CD4-positive, alpha-beta memory T cell (primary cell): ENCODE measurements at regions of chr2 and their contacts with region 1.

Region 1: GRCh38 chr2:37083873-37084794 is at the starts of genes GPATCH11 and HEATR5B:
- DNase-seq: peak; percentile 93 to 95 (median 94)
- H3K4me3 ChIP-seq: peak within 1 kb of the TSS; percentile 85 to 94
- H3K4me3 Mint-ChIP-seq: no peak within 1 kb of the TSS
- H3K27ac ChIP-seq: peak within 1 kb of the TSS; percentile 81
- H3K27ac Mint-ChIP-seq: no peak within 1 kb of the TSS
- H3K4me1 ChIP-seq: peaks cover 53% of the 10 kb centered on the region
- H3K4me1 Mint-ChIP-seq: peaks cover 13 to 39% (median 28%) of the 10 kb centered on the region in 4 donors
- H3K27me3 ChIP-seq: no peaks in the 10 kb centered on the region
- H3K27me3 Mint-ChIP-seq: no peaks in the 10 kb centered on the region
- total RNA-seq, gene GPATCH11: 17.3 to 18.9 TPM
- total RNA-seq, gene HEATR5B: 52.6 to 55.2 TPM

Region 2: GRCh38 chr2:37125416-37125815 is 41.3 kb after region 1 on chr2:
- CTCF ChIA-PET with region 1: no interaction called
- POLR2A ChIA-PET with region 1: no interaction called
- intact Hi-C with region 1: no loop called
- DNase-seq: no peak
- H3K4me3 ChIP-seq: no peak overlapping the region
- H3K4me3 Mint-ChIP-seq: no peak overlapping the region
- H3K27ac ChIP-seq: no peak overlapping the region
- H3K27ac Mint-ChIP-seq: no peak overlapping the region
- H3K4me1 ChIP-seq: no peaks in the 10 kb centered on the region
- H3K4me1 Mint-ChIP-seq: peaks cover 0 to 4% (median 3%) of the 10 kb centered on the region in 4 donors
- H3K27me3 ChIP-seq: no peaks in the 10 kb centered on the region
- H3K27me3 Mint-ChIP-seq: no peaks in the 10 kb centered on the region

Region 3: DNA sequence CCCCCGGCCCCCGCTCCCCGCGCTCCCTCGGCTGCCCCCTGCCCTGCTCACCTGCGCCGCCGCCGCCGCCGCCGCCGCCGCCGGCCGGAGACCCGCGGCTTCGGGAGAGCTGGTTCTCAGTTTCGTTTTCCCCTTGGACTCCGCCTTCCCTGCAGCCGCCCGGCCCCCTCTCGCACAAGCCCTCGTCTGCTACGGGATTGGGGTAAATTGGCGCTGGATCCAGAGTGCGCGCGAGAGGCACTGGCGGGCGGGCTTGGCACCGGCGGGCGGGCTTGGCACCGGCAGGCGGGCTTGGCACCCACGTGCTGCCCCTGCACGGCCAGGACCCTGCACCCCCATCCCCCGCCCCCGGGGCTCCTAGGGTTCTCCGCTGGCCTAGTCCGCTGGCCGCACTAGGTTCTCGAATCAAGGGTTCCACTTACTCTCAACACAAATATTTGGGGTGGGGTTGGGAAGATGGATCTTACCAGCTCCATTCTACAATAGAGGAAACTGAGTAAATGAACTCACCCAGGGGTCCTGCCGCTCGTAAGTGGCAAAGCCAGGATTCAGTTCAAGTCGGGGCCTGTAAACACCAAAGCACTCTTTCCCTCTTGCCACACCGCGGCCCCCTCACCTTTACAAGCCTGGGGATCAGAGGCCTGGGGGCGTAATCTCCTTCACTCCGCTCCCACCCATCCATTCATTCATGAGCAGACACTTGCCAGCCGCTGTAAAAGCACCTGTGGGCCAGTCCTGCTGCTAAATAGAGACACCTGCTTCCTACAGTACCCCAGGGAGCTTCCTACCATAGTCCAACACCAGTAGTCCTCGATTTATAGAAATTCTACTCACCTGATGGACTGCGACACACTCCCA is 73.0 kb after region 1 on chr2 and contains the start of gene EIF2AK2:
- CTCF ChIA-PET with region 1: no interaction called
- POLR2A ChIA-PET with region 1: interaction called, 3 read pairs
- intact Hi-C with region 1: loop called (anchors 2 kb)
- DNase-seq: peak; percentile 84 to 90 (median 87)
- H3K4me3 ChIP-seq: peak within 1 kb of the TSS; percentile 62 to 63
- H3K4me3 Mint-ChIP-seq: peak within 1 kb of the TSS; percentile 88 to 96 (median 94)
- H3K27ac ChIP-seq: peak within 1 kb of the TSS; percentile 72
- H3K27ac Mint-ChIP-seq: peak within 1 kb of the TSS; percentile 86 to 96 (median 92)
- H3K4me1 ChIP-seq: peaks cover 26% of the 10 kb centered on the region
- H3K4me1 Mint-ChIP-seq: peaks cover 34 to 54% (median 49%) of the 10 kb centered on the region in 4 donors
- H3K27me3 ChIP-seq: no peaks in the 10 kb centered on the region
- H3K27me3 Mint-ChIP-seq: no peaks in the 10 kb centered on the region
- total RNA-seq, gene EIF2AK2: 28.8 to 31.6 TPM